ENCODE measurements at regions of chr2 and their contacts with region 1.

Region 1: DNA sequence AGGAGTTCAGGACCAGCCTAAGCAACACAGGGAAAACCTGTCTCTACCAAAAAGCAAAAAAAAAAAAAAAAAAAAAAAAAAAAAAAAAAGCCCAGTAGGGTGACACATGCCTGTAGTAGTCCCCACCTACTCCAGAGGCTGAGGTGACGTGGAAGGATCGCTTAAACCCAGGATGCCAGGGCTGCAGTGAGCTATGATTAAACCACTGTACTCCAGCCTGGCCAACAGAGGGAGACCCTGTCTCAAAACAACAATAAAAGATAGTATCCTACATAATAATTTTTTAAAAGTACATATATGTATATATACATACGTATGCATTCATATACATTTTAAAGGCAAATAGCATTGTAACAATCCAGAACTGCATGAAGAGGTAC is 51.7 kb downstream of the SOS1 start:
- DNase-seq: no peak
- ATAC-seq: no peak
- H3K4me3 ChIP-seq: no peak overlapping the region
- H3K27ac ChIP-seq: no peak overlapping the region
- H3K4me1 ChIP-seq: no peaks in the 10 kb centered on the region
- H3K27me3 ChIP-seq: no peaks in the 10 kb centered on the region

Region 2: GRCh38 chr2:39124000-39124745 is 55.0 kb after region 1 on chr2:
- intact Hi-C with region 1: loop called in 3 of 4 experiments (anchors 10 kb)
- DNase-seq: peak; percentile 98 to 99 (median 99)
- ATAC-seq: peak; percentile 94 to 95
- H3K4me3 ChIP-seq: peak overlapping the region; percentile 88
- H3K27ac ChIP-seq: peak overlapping the region; percentile 88
- H3K4me1 ChIP-seq: no peaks in the 10 kb centered on the region
- H3K27me3 ChIP-seq: no peaks in the 10 kb centered on the region

Measured in right cardiac atrium (tissue), 5 donors.